ENCODE measurements at regions of chr1 and their contacts with region 1.

Region 1: DNA sequence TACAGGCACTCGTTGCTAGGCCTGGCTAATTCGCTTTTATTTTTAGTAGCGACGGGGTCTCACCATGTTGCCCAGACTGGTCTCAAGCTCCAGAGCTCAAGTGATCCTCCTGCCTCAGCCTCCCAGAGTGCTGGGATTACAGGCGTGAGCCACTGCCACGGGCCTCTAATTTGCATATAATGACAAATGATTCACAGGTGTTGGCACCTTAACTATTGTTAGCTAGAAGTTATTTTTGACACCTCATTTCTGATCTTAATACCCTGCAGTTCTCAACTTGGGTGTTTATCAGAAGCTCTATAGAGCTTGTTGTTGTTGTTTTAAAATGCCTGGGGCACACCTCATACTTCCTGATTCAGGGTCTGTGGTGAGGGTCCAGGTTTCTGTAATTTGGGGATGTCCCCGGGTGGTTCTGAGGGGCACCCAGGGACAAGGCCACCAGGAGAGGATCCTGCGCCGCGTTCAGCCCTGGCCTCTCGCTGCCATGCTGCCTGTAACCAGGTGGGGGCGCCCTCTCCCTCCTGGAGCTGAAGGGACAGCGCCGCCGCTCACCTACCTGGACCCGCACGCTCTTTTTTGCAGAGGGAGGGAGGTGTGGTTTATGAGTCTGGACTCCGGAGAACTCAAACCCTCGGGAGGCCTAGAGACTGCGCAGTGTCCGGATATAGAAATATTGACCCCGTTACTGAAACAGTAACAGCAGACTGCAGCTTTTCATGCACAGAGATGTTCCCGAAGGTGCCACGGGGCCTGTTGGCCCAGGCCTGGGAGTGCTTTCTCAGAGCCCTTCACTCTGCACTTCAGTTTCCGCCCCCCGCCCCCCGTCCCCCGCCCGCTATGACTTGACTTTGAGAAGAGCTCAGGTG is 23.0 kb upstream of the NEK2 start:
- DNase-seq: peak; percentile 85
- H3K4me3 Mint-ChIP-seq: peak overlapping the region; percentile 29
- H3K27ac Mint-ChIP-seq: peak overlapping the region; percentile 75
- H3K4me1 Mint-ChIP-seq: peaks cover 50% of the 10 kb centered on the region
- H3K27me3 Mint-ChIP-seq: peaks cover 13% of the 10 kb centered on the region

Region 2: GRCh38 chr1:211603191-211603701 is 95.1 kb before region 1 on chr1:
- CTCF ChIA-PET with region 1: no interaction called
- POLR2A ChIA-PET with region 1: no interaction called
- DNase-seq: no peak
- H3K4me3 Mint-ChIP-seq: no peak overlapping the region
- H3K27ac Mint-ChIP-seq: no peak overlapping the region
- H3K4me1 Mint-ChIP-seq: peaks cover 24% of the 10 kb centered on the region
- H3K27me3 Mint-ChIP-seq: no peaks in the 10 kb centered on the region

Region 3: DNA sequence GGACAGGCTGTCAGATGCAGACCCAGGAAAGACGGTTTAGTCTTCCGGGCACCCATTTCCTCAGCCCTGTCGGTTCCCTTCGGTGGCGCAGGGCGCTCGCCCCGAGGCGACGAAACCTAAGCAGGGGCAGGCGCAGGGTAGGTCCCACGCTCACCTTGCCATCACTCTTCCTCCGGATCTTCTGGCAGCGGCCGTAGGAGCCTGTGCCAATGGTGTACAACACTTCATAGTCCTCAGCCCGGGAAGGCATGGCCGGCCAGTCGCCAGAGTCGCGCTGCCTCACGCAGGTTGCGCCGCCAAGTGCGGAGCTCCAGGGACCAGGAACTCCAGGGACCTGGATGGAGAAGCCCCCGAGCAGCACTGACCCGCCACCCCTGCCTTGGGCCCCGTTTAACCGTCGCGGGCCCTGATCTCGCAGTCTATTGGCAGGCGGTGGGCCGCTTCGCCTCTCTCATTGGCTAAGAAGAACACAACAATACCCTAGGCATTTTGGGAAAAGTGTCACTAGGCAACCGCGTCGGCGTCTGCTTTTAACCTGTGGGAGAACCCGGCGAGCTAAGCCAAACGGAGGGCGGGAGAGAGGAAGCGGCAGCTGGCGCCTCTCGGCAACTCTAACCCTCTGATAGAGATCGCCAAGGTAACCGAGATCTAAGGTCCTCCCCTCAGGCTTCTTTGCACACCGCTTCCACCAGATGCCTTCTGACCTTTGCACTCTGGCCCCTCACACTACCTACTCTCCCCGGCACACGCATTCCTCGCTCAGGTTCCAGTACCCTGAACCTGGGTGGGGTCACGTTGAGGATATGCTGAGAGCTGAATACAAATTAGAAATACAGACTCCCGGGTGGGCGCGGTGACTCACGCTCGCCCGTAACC is 22.9 kb before region 1 on chr1 and contains the start of gene NEK2:
- CTCF ChIA-PET with region 1: interaction called, 15 read pairs
- POLR2A ChIA-PET with region 1: no interaction called
- DNase-seq: peak; percentile 96
- H3K4me3 Mint-ChIP-seq: peak within 1 kb of the TSS; percentile 91
- H3K27ac Mint-ChIP-seq: peak within 1 kb of the TSS; percentile 87
- H3K4me1 Mint-ChIP-seq: peaks cover 41% of the 10 kb centered on the region
- H3K27me3 Mint-ChIP-seq: no peaks in the 10 kb centered on the region
- total RNA-seq, gene NEK2: 49.0 to 51.9 TPM

Region 4: DNA sequence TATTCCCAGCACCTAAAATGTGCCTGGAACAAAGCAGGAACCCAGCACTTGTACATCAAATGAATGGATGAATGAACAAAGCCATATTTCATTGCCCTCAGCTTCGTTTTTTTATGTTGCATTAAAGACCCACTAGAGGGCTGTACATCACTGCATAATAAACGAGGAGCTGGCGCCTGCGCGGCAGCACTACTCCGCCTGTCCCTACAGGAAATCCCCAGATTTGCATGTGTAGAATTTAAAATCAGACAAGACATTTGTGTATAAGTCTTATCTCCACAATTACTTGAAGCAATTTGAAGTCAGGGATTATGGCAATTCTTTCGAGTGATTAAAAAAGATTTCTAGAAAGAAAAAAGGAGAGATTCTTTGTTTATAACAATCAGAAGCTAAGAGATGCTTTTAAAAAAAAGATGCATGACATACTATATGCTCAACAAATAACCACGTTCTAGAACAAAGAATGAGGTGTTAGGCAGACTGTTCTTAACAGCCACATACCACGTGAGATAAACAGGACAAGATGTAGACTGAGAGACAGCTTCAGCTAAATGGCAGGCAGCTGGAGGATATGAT is 17.6 kb before region 1 on chr1:
- CTCF ChIA-PET with region 1: interaction called, 30 read pairs
- POLR2A ChIA-PET with region 1: no interaction called
- DNase-seq: peak; percentile 82
- H3K4me3 Mint-ChIP-seq: no peak overlapping the region
- H3K27ac Mint-ChIP-seq: peak overlapping the region; percentile 75
- H3K4me1 Mint-ChIP-seq: peaks cover 16% of the 10 kb centered on the region
- H3K27me3 Mint-ChIP-seq: no peaks in the 10 kb centered on the region

Measured in activated CD4-positive, alpha-beta T cell treated with anti-CD3 and anti-CD28 coated beads, Interleukin-2, amount 10 ng/mL, durations not matched to agents 7 days and 5 days (primary cell).